Caki2 (cell line): ENCODE measurements at regions of chr1 and their contacts with region 1.

Region 1: GRCh38 chr1:159891275-159892157 is 8.4 kb downstream of the CFAP45 start:
- DNase-seq: peak; percentile 81

Region 2: DNA sequence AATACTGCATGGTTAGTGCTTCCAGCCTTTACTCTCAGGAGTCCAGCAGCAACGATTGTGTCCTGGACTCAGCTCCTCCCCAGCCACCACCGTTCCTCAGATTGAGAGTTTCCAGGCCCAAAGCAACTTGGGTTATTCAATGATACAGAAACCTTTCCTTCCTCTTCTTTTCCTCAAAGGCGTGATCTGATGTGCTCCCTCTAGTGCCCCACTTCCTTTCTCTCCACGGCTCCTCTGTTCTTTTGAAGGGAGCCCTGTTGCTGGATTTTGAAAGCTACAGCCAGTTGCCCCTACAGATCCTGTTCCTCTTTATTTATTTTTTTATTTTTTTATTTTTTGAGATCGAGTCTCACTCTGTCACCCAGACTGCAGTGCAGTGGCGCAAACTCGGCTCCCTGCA is 191.2 kb before region 1 on chr1:
- in situ Hi-C with region 1: no loop called
- DNase-seq: no peak

Region 3: GRCh38 chr1:159780583-159781582 is 110.6 kb before region 1 on chr1 and contains the start of gene DUSP23:
- in situ Hi-C with region 1: loop called (anchors 25 kb)
- DNase-seq: peak; percentile 99
- total RNA-seq, gene DUSP23: 86.0 and 130 TPM in 2 replicates

Region 4: DNA sequence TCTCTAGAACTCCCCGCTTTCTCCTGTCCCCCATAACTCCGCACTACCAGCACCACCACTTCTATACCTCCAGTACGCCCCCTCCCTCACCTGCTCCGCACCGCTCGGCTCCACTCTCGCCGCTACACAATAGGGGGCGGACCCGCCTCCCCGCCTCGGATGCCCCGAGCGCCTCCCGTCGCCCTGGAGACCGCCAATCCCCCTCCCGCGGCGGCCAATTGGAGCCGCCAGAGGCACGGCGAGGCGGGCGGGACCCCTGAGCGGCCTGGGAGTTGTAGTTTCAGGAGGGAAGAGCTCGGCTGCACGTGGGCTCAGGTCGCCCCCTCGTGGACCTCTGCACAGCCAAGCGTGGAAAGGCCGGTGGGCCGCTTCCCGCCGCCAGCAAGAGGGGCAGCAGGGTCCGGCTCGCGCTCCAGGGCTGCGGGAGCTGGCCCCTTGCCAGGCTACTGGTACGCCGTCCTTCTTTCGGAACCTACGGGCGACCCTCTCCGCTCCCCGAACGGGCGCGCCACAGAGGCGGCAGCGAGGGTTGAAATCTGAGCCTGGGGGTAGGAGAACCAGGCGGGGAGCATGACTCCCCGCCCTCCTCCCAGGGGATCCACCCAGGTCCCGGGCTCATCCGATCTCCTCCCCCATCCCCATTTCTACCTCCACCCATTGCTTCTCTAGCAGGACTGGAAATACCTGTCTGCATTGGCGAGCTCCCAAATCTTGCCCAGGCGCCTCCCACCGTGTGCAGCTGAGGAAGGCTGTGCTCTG is 54.1 kb after region 1 on chr1 and contains the start of gene IGSF9:
- in situ Hi-C with region 1: no loop called
- DNase-seq: no peak
- total RNA-seq, gene IGSF9: 0.03 TPM in 1 of 2 replicates, not detected in the other

Region 5: GRCh38 chr1:159991513-159991912 is 100.0 kb after region 1 on chr1:
- in situ Hi-C with region 1: no loop called
- DNase-seq: no peak